ENCODE measurements at regions of chr15 and their contacts with region 1.

Region 1: GRCh38 chr15:70763120-70763878 is at the start of gene UACA:
- DNase-seq: peak; percentile 97
- ATAC-seq: peak; percentile 98
- total RNA-seq, gene UACA: 27.9 TPM

Region 2: GRCh38 chr15:70679919-70680231 is 83.4 kb before region 1 on chr15:
- intact Hi-C with region 1: loop called (anchors 10 kb)
- DNase-seq: no peak
- ATAC-seq: no peak

Region 3: DNA sequence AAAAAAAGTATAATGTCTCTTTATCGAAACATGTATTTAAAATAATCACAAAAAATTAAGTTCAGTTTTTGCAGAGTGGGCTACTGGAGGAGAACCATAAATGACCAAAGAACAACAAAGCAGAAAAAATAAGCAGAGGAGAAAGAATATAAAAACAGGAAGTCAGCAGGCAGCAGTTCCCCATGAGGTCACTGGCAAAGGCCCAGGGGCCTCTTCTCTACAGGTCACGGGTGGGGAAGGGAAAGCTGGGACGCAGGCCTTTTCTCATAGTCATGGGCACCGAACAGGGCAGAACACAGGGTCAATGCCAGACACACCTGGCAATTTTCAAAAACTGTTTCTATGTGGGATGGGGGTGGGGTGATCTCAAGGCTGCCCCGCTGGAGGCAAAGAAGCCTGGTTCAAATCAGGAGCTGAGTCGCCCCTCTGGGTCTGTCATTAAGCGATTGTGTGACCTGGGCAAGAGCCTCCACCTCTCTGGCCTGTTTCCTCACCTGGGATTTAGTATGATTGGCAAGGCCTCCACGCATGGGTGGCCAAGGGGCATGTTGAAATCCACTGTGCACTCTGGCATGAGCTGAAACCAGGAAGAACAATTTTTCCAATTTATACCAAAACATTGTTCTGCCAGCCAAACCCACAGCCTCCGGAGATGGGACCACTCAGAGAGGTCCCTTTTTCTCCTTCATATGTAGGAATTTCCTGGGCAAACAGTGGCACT is 43.9 kb after region 1 on chr15:
- intact Hi-C with region 1: loop called (anchors 5 kb)
- DNase-seq: peak; percentile 79
- ATAC-seq: peak; percentile 55

Region 4: DNA sequence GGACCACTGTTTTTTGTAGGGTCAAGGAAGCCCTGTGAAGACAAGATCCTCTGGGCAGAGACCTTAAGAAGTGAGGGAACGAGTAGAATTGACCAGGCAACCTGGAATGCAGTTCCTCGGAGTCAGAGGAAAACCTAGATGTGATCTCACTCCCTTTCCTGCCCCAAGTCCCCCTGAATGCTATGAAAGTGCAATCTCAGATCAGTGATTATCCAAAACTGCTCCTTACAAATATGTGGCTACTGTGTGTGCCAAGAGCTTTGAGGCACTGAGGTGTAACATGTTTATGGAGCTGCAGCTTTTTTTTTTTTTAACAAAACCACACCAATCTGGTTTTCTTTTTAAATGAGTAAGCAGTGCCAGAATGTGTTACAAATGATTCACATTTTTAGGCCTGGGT is 387.8 kb after region 1 on chr15:
- intact Hi-C with region 1: no loop called
- DNase-seq: no peak
- ATAC-seq: no peak